ENCODE measurements at regions of chr14 and their contacts with region 1.

Region 1: GRCh38 chr14:57221931-57222330 is 46.8 kb downstream of the EXOC5 start:
- H3K4me3 Mint-ChIP-seq: no peak overlapping the region
- H3K27ac Mint-ChIP-seq: no peak overlapping the region
- H3K4me1 Mint-ChIP-seq: peaks cover 5% of the 10 kb centered on the region
- H3K27me3 Mint-ChIP-seq: no peaks in the 10 kb centered on the region

Region 2: GRCh38 chr14:57254884-57255283 is 33.0 kb after region 1 on chr14:
- intact Hi-C with region 1: loop called (anchors 5 kb)
- H3K4me3 Mint-ChIP-seq: no peak overlapping the region
- H3K27ac Mint-ChIP-seq: no peak overlapping the region
- H3K4me1 Mint-ChIP-seq: peaks cover 40% of the 10 kb centered on the region
- H3K27me3 Mint-ChIP-seq: no peaks in the 10 kb centered on the region

Region 3: GRCh38 chr14:57317316-57317715 is 95.4 kb after region 1 on chr14:
- intact Hi-C with region 1: no loop called
- H3K4me3 Mint-ChIP-seq: no peak overlapping the region
- H3K27ac Mint-ChIP-seq: no peak overlapping the region
- H3K4me1 Mint-ChIP-seq: peaks cover 6% of the 10 kb centered on the region
- H3K27me3 Mint-ChIP-seq: peaks cover 3% of the 10 kb centered on the region